ENCODE measurements at regions of chr4 and their contacts with region 1.

Region 1: GRCh38 chr4:166594326-166594946 is 639.9 kb downstream of the SPOCK3 start:
- DNase-seq: peak; percentile 73
- H3K4me3 Mint-ChIP-seq: no peak overlapping the region
- H3K27ac Mint-ChIP-seq: no peak overlapping the region
- H3K4me1 Mint-ChIP-seq: no peaks in the 10 kb centered on the region
- H3K27me3 Mint-ChIP-seq: no peaks in the 10 kb centered on the region
- CTCF ChIP-seq: peak; percentile 78

Region 2: GRCh38 chr4:165537028-165537648 is 1057.3 kb before region 1 on chr4:
- CTCF ChIA-PET with region 1: interaction called, 7 read pairs
- POLR2A ChIA-PET with region 1: no interaction called
- intact Hi-C with region 1: loop called (anchors 1 kb)
- DNase-seq: peak; percentile 58
- H3K4me3 Mint-ChIP-seq: no peak overlapping the region
- H3K27ac Mint-ChIP-seq: no peak overlapping the region
- H3K4me1 Mint-ChIP-seq: no peaks in the 10 kb centered on the region
- H3K27me3 Mint-ChIP-seq: no peaks in the 10 kb centered on the region
- CTCF ChIP-seq: peak; percentile 63

Region 3: GRCh38 chr4:166153548-166153947 is 440.9 kb before region 1 on chr4:
- CTCF ChIA-PET with region 1: interaction called, 12 read pairs
- POLR2A ChIA-PET with region 1: no interaction called
- intact Hi-C with region 1: no loop called
- DNase-seq: no peak
- H3K4me3 Mint-ChIP-seq: no peak overlapping the region
- H3K27ac Mint-ChIP-seq: no peak overlapping the region
- H3K4me1 Mint-ChIP-seq: no peaks in the 10 kb centered on the region
- H3K27me3 Mint-ChIP-seq: no peaks in the 10 kb centered on the region
- CTCF ChIP-seq: no peak

Region 4: GRCh38 chr4:166174717-166175490 is 419.5 kb before region 1 on chr4:
- CTCF ChIA-PET with region 1: interaction called, 17 read pairs
- POLR2A ChIA-PET with region 1: no interaction called
- intact Hi-C with region 1: no loop called
- DNase-seq: peak; percentile 31
- H3K4me3 Mint-ChIP-seq: no peak overlapping the region
- H3K27ac Mint-ChIP-seq: no peak overlapping the region
- H3K4me1 Mint-ChIP-seq: no peaks in the 10 kb centered on the region
- H3K27me3 Mint-ChIP-seq: no peaks in the 10 kb centered on the region
- CTCF ChIP-seq: no peak

Region 5: DNA sequence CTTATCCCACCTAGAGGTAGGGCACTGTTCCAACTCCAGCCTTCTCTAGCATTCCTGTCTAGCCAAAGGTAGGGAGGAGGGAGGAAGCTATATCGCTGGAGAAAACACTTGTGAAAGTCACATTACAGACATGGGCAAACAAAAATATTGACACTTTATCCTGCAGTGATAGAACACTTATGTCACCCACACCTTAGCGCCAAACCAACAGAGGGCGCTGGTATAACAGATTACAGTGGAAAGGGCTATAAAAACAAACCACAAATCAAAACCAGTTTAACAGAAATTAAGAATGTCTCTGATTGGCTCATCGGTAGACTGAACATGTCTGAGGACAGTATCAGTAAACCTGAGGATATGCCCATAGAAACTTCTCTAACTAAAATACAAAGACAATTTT is 270.1 kb before region 1 on chr4:
- CTCF ChIA-PET with region 1: no interaction called
- POLR2A ChIA-PET with region 1: no interaction called
- intact Hi-C with region 1: loop called (anchors 2 kb)
- DNase-seq: peak; percentile 39
- H3K4me3 Mint-ChIP-seq: no peak overlapping the region
- H3K27ac Mint-ChIP-seq: no peak overlapping the region
- H3K4me1 Mint-ChIP-seq: peaks cover 11% of the 10 kb centered on the region
- H3K27me3 Mint-ChIP-seq: no peaks in the 10 kb centered on the region
- CTCF ChIP-seq: peak; percentile 21

Region 6: DNA sequence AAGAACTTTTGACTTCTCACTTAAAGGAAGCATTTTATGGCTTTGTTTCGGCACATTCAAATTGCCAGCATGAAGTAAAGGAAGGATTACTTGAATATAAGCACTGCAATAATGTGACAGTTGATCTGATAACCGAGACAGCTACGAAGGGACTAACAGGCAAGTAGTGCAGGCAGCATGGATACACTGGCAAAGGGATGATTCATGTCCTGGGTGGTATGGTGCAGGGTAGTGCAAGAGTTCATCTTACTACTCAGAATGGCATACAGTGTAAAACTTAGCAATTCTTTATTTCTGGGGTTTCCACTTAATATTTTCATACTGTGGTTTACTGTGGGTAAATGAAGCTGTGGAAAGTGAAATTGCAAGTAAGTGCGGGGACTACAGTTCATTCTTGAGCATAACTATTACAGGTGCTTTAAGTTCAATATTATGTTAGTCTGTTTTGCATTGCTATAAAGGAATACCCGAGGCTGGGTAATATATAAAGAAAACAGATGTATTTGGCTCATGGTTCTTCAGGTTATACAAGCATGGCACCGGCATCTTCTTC is 28.1 kb after region 1 on chr4:
- CTCF ChIA-PET with region 1: interaction called, 10 read pairs
- POLR2A ChIA-PET with region 1: no interaction called
- intact Hi-C with region 1: no loop called
- DNase-seq: peak; percentile 2
- H3K4me3 Mint-ChIP-seq: no peak overlapping the region
- H3K27ac Mint-ChIP-seq: no peak overlapping the region
- H3K4me1 Mint-ChIP-seq: no peaks in the 10 kb centered on the region
- H3K27me3 Mint-ChIP-seq: no peaks in the 10 kb centered on the region
- CTCF ChIP-seq: no peak

Region 7: DNA sequence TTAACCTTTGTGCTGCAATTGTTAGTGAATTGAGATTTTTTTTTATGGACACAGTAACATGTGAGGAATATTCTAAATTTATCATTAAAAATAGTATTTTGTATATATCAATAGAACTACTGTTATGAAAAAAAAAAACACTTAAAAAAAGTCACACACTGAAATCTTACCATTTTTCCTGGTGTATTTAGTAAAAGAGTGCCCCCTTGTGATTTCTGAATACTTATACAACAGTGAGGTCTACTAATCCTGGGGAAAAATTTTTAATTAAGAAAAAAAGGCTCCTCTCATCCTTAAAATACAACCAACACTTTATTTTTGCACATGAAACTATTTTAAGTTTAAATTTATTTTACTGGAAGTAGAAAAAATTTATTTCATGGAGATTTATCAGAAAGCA is 696.2 kb after region 1 on chr4:
- CTCF ChIA-PET with region 1: interaction called, 4 read pairs
- POLR2A ChIA-PET with region 1: no interaction called
- intact Hi-C with region 1: loop called (anchors 2 kb)
- DNase-seq: peak; percentile 33
- H3K4me3 Mint-ChIP-seq: no peak overlapping the region
- H3K27ac Mint-ChIP-seq: no peak overlapping the region
- H3K4me1 Mint-ChIP-seq: no peaks in the 10 kb centered on the region
- H3K27me3 Mint-ChIP-seq: no peaks in the 10 kb centered on the region
- CTCF ChIP-seq: peak; percentile 42

Measured in MCF 10A (cell line).